WTC11 (cell line): ENCODE measurements at regions of chr17 and their contacts with region 1.

Region 1: DNA sequence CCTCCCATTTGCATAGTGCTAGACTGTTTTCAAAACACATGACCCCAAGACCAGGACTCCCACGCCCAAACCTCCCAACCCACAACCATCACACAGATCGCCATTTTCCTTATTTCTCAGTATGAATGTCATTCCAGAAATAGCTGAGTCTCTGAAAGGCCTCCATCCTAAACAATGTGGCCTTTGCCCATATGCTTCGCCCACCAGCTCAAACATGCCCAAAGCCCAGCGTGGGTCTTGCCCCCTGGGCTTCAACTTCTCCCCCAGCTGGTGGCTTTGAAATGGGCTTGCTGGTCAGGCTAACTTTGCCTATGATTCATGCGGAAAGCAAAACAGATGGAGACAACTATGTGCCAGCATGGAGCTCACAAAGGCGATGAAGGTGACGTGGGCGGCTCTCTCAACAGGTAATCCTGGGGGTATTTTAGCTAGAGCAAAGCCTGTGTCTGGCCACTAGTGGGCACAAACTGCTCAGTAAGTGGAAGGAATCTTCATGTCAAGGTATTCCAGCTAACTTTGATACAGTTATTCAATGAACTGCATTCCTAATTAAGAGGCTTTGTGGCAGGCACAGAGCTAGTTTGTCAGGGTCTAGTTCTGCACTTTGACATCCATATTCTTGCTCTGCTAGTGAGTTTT is 17.1 kb downstream of the PMP22 start:
- DNase-seq: peak; percentile 24
- ATAC-seq: peak; percentile 71
- H3K4me3 Mint-ChIP-seq: no peak overlapping the region
- H3K27ac Mint-ChIP-seq: no peak overlapping the region
- H3K4me1 Mint-ChIP-seq: peaks cover 14% of the 10 kb centered on the region
- H3K27me3 Mint-ChIP-seq: no peaks in the 10 kb centered on the region
- CTCF ChIP-seq: no peak

Region 2: DNA sequence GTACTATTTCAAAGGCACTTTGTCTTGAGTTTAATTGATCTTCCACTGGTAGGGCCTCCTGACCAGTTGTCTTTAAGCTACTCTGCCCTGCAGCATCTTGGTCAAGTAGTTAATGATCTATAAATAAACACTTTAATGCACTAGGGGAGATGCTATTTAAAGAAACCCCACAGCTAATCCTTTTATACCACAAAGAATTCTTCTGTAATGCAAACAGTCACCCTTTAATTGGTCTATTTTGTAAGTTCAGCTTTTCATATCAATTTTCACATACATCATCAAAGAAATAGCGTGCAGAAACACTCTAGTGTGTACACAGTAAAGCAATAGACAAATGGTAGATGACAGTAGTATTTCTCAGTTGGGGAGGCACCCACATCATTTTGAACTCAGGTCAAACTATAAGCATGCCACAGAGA is 53.1 kb before region 1 on chr17:
- CTCF ChIA-PET with region 1: no interaction called
- POLR2A ChIA-PET with region 1: no interaction called
- DNase-seq: no peak
- ATAC-seq: no peak
- H3K4me3 Mint-ChIP-seq: no peak overlapping the region
- H3K27ac Mint-ChIP-seq: no peak overlapping the region
- H3K4me1 Mint-ChIP-seq: no peaks in the 10 kb centered on the region
- H3K27me3 Mint-ChIP-seq: no peaks in the 10 kb centered on the region
- CTCF ChIP-seq: no peak

Region 3: DNA sequence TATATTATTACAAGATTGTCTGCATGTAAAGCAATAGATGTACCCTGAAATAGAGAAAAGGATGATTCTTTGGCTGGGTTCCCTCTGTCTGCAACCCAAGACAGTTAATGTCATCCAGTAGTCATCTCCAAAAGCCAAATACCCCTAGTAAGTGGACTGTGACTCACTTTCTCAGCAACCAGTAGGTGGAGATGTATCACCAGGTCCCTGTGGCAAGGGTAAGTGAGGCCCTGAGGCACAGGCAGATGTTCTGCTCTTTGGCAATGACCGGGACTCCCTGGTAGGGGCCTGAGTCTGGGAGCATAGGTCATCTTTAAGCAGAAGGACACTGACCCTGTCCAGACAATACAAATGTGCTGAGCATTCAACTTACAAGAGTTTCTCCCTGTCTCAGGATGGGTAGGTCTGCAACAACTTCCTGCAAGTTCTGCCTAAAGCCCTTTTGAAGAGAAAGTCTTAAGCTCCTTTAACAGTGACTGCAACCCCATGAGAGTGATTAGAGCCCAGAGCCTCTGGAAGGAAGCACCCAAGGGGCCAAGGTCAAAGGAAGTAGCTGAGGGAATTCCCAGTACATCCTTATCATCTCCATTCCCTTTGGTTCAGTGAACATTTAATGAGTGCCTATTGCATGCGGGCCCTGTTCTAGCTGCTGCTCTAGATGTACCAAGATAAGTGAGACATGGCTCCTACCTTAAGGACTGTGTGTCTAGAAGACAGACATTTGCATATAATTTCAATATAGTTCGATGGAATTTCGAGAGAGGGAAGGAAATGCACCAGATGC is 14.8 kb before region 1 on chr17:
- CTCF ChIA-PET with region 1: interaction called, 18 read pairs
- POLR2A ChIA-PET with region 1: no interaction called
- DNase-seq: peak; percentile 27
- ATAC-seq: peak; percentile 82
- H3K4me3 Mint-ChIP-seq: no peak overlapping the region
- H3K27ac Mint-ChIP-seq: no peak overlapping the region
- H3K4me1 Mint-ChIP-seq: peaks cover 5% of the 10 kb centered on the region
- H3K27me3 Mint-ChIP-seq: no peaks in the 10 kb centered on the region
- CTCF ChIP-seq: no peak

Region 4: GRCh38 chr17:15431196-15431595 is 183.2 kb after region 1 on chr17:
- CTCF ChIA-PET with region 1: interaction called, 11 read pairs
- POLR2A ChIA-PET with region 1: no interaction called
- DNase-seq: no peak
- ATAC-seq: no peak
- H3K4me3 Mint-ChIP-seq: no peak overlapping the region
- H3K27ac Mint-ChIP-seq: no peak overlapping the region
- H3K4me1 Mint-ChIP-seq: peaks cover 6% of the 10 kb centered on the region; the same call in 1 of the 2 replicates
- H3K27me3 Mint-ChIP-seq: peaks cover 3% of the 10 kb centered on the region; the same call in 1 of the 2 replicates
- CTCF ChIP-seq: no peak